ENCODE measurements at regions of chr3 and their contacts with region 1.

Region 1: DNA sequence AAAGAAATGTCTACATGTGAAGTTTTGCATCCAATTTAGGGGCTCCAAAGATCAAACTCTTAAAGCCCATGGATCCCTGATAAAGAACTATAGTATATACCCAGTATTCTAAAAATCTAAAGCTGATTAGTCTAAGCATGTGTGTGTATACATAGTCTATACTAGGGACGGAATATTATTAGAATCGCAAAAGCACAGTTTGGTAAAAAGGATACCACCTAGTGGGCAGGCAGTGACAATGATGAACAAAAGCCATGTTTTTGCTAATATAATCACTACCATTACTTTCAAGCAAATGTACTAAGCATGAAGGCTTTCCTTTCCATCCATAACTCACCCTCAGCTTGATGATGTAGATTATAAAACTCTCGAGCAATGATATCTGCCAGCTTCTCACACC is 16.5 kb downstream of the POLQ start:
- DNase-seq: peak; percentile 23
- ATAC-seq: peak; percentile 57
- H3K4me3 ChIP-seq: no peak overlapping the region
- H3K27ac ChIP-seq: no peak overlapping the region
- H3K4me1 ChIP-seq: no peaks in the 10 kb centered on the region
- H3K27me3 ChIP-seq: no peaks in the 10 kb centered on the region
- CTCF ChIP-seq: peak; percentile 66

Region 2: DNA sequence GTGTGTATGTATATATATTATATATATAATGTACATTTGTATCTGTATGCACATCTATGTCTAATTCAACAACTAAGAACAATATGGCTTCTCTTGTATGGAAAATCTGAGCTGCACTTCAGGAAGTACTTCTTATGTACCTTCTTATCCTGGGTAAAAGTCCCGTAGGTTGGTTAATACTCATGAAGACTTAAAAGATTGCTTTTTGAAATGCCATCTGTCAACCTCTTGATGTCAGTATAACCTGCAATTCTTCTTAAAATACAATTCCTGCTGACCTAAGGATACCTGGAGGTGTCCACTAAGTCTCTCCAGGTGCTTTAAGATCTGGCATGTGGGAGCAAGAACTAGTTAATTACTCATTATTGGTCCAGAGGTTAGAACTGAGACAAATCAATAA is 200.3 kb before region 1 on chr3:
- CTCF ChIA-PET with region 1: no interaction called
- POLR2A ChIA-PET with region 1: no interaction called
- intact Hi-C with region 1: loop called (anchors 1 kb)
- DNase-seq: no peak
- ATAC-seq: no peak
- H3K4me3 ChIP-seq: no peak overlapping the region
- H3K27ac ChIP-seq: no peak overlapping the region
- H3K4me1 ChIP-seq: no peaks in the 10 kb centered on the region
- H3K27me3 ChIP-seq: peaks cover 16% of the 10 kb centered on the region; the same call in 1 of the 2 replicates
- CTCF ChIP-seq: peak; percentile 24; the same call in 1 of the 2 replicates

Region 3: DNA sequence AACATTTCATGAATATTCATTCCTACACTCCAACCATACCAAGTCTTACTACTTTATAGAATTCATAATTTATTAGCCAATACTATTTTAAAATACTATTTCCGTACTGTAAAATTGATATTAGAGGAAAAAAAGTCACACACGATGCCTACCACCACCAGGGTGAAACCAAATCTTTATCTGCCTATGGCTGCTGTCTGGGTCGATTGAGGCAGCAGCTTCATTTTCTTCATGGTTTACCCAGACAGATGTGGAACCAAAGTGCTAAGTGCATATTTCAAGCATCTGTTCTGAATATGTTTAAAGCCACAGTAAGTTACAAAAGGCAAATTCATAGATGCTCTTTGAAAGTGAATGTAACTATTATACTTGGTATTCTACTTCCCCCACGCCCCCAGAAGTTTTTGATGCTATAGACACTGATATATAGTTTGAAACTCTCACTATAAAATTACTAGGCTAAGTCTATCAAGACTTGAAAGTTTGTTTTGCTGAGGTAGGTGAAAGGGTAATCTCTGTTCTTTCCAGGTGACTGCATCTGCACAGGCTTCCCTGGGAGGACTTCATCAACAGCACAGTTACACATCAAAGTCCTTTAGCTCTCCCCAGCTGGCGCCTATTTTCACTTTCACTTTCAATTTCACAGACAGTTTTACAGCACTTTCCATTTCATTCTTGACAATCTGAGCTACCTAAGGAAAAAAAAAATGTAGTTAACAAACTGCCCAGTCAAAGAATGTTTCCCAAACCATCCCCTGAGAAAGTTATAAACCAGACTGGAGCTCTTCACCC is 97.4 kb before region 1 on chr3:
- CTCF ChIA-PET with region 1: no interaction called
- POLR2A ChIA-PET with region 1: no interaction called
- intact Hi-C with region 1: loop called (anchors 10 kb)
- DNase-seq: peak; percentile 17
- ATAC-seq: no peak
- H3K4me3 ChIP-seq: no peak overlapping the region
- H3K27ac ChIP-seq: no peak overlapping the region
- H3K4me1 ChIP-seq: no peaks in the 10 kb centered on the region
- H3K27me3 ChIP-seq: no peaks in the 10 kb centered on the region
- CTCF ChIP-seq: no peak

Region 4: DNA sequence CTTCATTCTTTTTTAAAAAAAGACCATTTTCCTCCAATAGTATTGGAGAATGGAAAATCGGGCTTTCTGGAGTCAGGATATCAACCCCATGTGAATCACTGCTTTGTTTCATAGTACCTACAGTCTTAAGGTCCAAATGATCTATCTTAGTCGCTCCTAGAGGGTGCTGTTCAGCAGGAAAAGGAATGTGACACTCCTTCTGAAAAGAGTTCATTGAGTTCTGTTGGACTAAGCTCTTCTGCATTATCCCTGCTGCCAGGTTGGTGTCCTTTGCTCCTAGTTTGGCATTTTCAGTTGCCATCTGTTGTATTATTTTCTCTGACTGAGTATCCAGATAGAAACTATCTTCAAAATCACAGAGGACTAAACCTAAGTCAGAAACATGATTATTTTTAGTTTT is 40.7 kb before region 1 on chr3:
- CTCF ChIA-PET with region 1: no interaction called
- POLR2A ChIA-PET with region 1: no interaction called
- intact Hi-C with region 1: loop called (anchors 5 kb)
- DNase-seq: peak; percentile 24
- ATAC-seq: peak; percentile 71; the same call in 1 of the 2 replicates
- H3K4me3 ChIP-seq: no peak overlapping the region
- H3K27ac ChIP-seq: no peak overlapping the region
- H3K4me1 ChIP-seq: no peaks in the 10 kb centered on the region
- H3K27me3 ChIP-seq: no peaks in the 10 kb centered on the region
- CTCF ChIP-seq: peak; percentile 56